PC-3 (cell line): ENCODE measurements at regions of chr1 and their contacts with region 1.

Region 1: GRCh38 chr1:244065960-244066388 is 14.9 kb downstream of the ZBTB18 start:
- DNase-seq: peak; percentile 36
- ATAC-seq: peak; percentile 24; the same call in 1 of the 2 replicates
- H3K4me3 ChIP-seq: no peak overlapping the region
- H3K27ac ChIP-seq: no peak overlapping the region
- H3K4me1 ChIP-seq: no peaks in the 10 kb centered on the region
- H3K27me3 ChIP-seq: no peaks in the 10 kb centered on the region
- CTCF ChIP-seq: no peak

Region 2: DNA sequence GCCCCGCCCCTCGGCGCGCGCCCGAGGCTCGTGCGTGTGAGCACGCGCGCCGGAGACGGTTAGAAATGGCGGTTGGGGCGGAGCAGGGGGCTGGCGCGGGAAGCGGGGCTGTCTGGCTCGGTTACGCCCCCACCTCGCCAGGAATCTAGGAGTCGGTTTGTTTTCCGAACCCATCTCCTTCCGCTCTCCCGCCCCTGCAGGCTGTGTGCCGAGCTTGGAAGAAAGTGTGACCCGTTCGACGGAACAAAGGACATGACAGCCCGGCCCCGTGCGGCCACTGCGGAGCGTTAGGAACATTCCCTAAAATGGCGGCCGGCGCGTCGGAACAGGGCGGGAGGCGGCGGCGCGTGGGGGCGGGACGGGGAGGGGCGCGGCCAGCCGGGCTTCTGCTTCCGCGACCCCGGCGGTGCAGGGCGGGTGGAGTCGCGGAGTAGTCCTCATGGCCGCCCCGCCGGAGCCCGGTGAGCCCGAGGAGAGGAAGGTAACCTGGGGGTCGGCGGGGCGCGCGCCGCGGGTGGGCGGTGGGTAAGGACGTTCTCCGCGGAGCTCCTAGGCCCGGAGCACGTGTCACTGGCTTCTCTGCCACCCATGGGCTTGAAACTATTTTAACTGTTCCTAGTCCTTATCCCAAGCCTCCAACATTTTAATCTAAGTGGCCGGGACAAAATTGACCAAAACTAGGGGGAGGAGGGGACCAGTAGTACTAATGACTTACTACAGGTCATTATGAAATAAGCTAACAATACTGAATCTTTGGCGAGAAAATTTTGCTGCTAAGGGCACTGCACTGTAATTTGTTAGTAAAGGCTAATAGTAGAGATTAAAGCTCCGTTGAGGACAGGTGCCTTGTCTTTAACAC is 769.5 kb after region 1 on chr1 and contains the start of gene COX20:
- CTCF ChIA-PET with region 1: no interaction called
- POLR2A ChIA-PET with region 1: interaction called, 14 read pairs
- intact Hi-C with region 1: no loop called
- DNase-seq: peak; percentile 95
- ATAC-seq: peak; percentile 59
- H3K4me3 ChIP-seq: peak within 1 kb of the TSS; percentile 94
- H3K27ac ChIP-seq: peak within 1 kb of the TSS; percentile 91
- H3K4me1 ChIP-seq: peaks cover 47% of the 10 kb centered on the region
- H3K27me3 ChIP-seq: no peaks in the 10 kb centered on the region
- CTCF ChIP-seq: no peak
- total RNA-seq, gene COX20: 50.0 and 55.8 TPM in 2 replicates